HCT116 (cell line): ENCODE measurements at regions of chr1 and their contacts with region 1.

Region 1: GRCh38 chr1:155227261-155228095 is 19.0 kb downstream of the MTX1 start:
- DNase-seq: peak; percentile 97
- ATAC-seq: peak; percentile 95
- H3K4me3 ChIP-seq: peak overlapping the region; percentile 63 to 69
- H3K27ac ChIP-seq: peak overlapping the region; percentile 95
- H3K4me1 ChIP-seq: peaks cover 17 to 43% of the 10 kb centered on the region in 2 experiments
- H3K27me3 ChIP-seq: no peaks in the 10 kb centered on the region
- CTCF ChIP-seq: no peak
- POLR2A ChIP-seq: peak; percentile 91
- RAD21 ChIP-seq: no peak

Region 2: DNA sequence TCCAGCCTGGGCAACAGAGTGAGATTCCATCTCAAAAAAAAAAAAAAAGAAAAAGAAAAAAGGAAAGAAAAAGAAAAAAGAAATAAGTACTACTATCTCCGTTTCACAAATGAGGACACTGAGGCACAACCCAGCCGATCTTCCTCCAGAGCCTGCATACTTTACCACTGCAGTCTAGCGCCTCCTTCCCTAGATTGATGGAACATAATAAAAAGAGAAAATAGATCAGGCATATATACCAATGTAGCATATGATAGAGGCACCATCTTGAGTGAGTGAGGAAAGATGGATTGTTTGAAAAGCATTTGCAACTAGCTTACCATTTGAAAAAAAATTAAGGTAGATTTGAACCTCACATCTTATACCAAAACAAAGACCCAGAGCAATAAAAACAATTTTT is 82.0 kb before region 1 on chr1:
- CTCF ChIA-PET with region 1: no interaction called
- POLR2A ChIA-PET with region 1: no interaction called
- RAD21 ChIA-PET with region 1: no interaction called
- intact Hi-C with region 1: no loop called
- DNase-seq: no peak
- ATAC-seq: no peak
- H3K4me3 ChIP-seq: no peak overlapping the region
- H3K27ac ChIP-seq: no peak overlapping the region
- H3K4me1 ChIP-seq: peaks cover 0 to 3% of the 10 kb centered on the region in 2 experiments; a peak in 2 of 4 replicates
- H3K27me3 ChIP-seq: no peaks in the 10 kb centered on the region
- CTCF ChIP-seq: peak in 1 of 3 experiments; percentile 17; a peak in 2 of 6 replicates
- POLR2A ChIP-seq: no peak
- RAD21 ChIP-seq: no peak

Region 3: DNA sequence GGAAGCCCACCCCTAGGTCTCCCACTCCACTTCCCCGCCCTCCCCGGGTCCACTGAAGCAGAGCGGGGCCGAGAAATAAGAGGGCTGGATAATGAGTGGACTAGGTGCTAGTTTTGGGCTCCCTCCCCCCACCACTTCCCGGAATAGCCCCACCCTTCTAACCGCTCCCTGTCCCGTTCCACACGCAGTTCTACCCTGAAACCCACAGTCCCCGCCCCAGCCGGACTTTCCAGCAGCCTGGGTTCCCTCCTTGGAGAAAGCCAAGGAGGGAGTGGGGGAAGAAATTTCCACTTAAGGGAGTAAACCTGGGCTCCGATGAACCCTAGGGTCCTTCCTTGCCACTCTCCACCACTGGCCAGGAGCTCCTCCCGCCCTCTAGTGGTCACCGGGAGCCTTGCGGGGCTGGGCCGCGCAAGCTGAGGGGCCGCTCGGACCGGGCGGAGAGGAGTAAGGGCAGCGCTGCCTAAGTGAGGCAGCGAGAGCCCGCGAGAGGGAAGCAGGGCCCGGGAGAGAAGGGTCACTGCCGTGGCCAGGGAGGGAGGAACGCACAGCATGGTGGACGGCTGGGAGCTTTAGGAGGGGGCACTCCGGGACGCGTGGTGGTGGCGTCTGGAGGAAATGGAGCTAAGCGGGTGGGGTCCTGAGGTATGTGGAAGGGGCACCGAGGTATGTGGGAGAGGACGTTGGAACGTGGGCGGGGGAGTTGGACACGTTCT is 34.0 kb before region 1 on chr1:
- CTCF ChIA-PET with region 1: interaction called, 7 read pairs
- POLR2A ChIA-PET with region 1: interaction called, 14 read pairs
- RAD21 ChIA-PET with region 1: no interaction called
- intact Hi-C with region 1: no loop called
- DNase-seq: peak; percentile 79
- ATAC-seq: peak; percentile 78
- H3K4me3 ChIP-seq: peak overlapping the region; percentile 65 to 66
- H3K27ac ChIP-seq: peak overlapping the region; percentile 97
- H3K4me1 ChIP-seq: peaks cover 15 to 36% of the 10 kb centered on the region in 2 experiments; a peak in 3 of 4 replicates
- H3K27me3 ChIP-seq: no peaks in the 10 kb centered on the region
- CTCF ChIP-seq: peak in 2 of 3 experiments; percentile 97 to 99; a peak in 4 of 6 replicates
- POLR2A ChIP-seq: peak; percentile 30
- RAD21 ChIP-seq: no peak

Region 4: GRCh38 chr1:155244368-155245162 is 17.1 kb after region 1 on chr1:
- CTCF ChIA-PET with region 1: interaction called, 3 read pairs
- POLR2A ChIA-PET with region 1: interaction called, 7 read pairs
- RAD21 ChIA-PET with region 1: no interaction called
- intact Hi-C with region 1: loop called (anchors 1 kb)
- DNase-seq: peak; percentile 99
- ATAC-seq: peak; percentile 91
- H3K4me3 ChIP-seq: peak overlapping the region; percentile 69 to 74
- H3K27ac ChIP-seq: peak overlapping the region; percentile 78
- H3K4me1 ChIP-seq: peaks cover 16 to 46% of the 10 kb centered on the region in 2 experiments
- H3K27me3 ChIP-seq: no peaks in the 10 kb centered on the region
- CTCF ChIP-seq: peak in 1 of 3 experiments; percentile 14; a peak in 2 of 6 replicates
- POLR2A ChIP-seq: peak; percentile 95
- RAD21 ChIP-seq: no peak